Activated naive CD4-positive, alpha-beta T cell treated with anti-CD3 and anti-CD28 coated beads for 36 hours (primary cell): ENCODE measurements at regions of chr13 and their contacts with region 1.

Region 1: GRCh38 chr13:44710576-44710975 is 134.4 kb upstream of the TSC22D1 start:
- DNase-seq: peak; percentile 53
- H3K4me3 Mint-ChIP-seq: no peak overlapping the region
- H3K27ac Mint-ChIP-seq: no peak overlapping the region
- H3K4me1 Mint-ChIP-seq: peaks cover 11% of the 10 kb centered on the region
- H3K27me3 Mint-ChIP-seq: peaks cover 4% of the 10 kb centered on the region

Region 2: GRCh38 chr13:44537248-44537647 is 173.3 kb before region 1 on chr13:
- CTCF ChIA-PET with region 1: no interaction called
- intact Hi-C with region 1: no loop called
- DNase-seq: no peak
- H3K4me3 Mint-ChIP-seq: no peak overlapping the region
- H3K27ac Mint-ChIP-seq: no peak overlapping the region
- H3K4me1 Mint-ChIP-seq: peaks cover 8% of the 10 kb centered on the region
- H3K27me3 Mint-ChIP-seq: no peaks in the 10 kb centered on the region

Region 3: GRCh38 chr13:44648392-44649103 is 62.0 kb before region 1 on chr13:
- CTCF ChIA-PET with region 1: no interaction called
- intact Hi-C with region 1: loop called (anchors 2 kb)
- DNase-seq: no peak
- H3K4me3 Mint-ChIP-seq: no peak overlapping the region
- H3K27ac Mint-ChIP-seq: no peak overlapping the region
- H3K4me1 Mint-ChIP-seq: peaks cover 14% of the 10 kb centered on the region
- H3K27me3 Mint-ChIP-seq: peaks cover 22% of the 10 kb centered on the region

Region 4: DNA sequence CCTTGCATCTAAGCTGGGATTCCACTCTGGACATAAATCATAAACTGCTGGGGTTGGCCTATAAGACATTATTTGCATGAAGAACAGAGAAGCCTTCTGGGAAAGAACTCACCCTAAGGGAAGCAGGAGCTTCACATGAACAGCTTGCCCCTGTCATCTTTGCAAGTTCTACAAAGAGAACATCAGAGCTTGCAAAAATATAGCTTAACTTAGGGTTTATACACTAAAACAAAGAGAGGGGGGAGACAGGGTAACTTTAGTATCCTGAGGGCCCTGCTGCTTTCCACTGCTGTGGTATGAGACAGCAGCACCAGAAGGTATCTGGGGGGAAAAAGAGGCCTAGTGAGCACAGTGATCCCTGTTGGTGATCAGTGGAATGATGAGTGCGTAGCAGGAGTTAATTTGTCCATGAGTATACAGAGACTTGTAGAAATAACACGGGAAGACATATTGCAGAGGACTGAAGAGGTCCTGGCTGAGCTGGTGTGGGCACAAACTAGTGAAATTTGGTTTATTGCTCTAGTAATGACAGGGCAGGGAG is 18.3 kb before region 1 on chr13:
- CTCF ChIA-PET with region 1: no interaction called
- intact Hi-C with region 1: no loop called
- DNase-seq: no peak
- H3K4me3 Mint-ChIP-seq: no peak overlapping the region
- H3K27ac Mint-ChIP-seq: no peak overlapping the region
- H3K4me1 Mint-ChIP-seq: no peaks in the 10 kb centered on the region
- H3K27me3 Mint-ChIP-seq: peaks cover 6% of the 10 kb centered on the region

Region 5: DNA sequence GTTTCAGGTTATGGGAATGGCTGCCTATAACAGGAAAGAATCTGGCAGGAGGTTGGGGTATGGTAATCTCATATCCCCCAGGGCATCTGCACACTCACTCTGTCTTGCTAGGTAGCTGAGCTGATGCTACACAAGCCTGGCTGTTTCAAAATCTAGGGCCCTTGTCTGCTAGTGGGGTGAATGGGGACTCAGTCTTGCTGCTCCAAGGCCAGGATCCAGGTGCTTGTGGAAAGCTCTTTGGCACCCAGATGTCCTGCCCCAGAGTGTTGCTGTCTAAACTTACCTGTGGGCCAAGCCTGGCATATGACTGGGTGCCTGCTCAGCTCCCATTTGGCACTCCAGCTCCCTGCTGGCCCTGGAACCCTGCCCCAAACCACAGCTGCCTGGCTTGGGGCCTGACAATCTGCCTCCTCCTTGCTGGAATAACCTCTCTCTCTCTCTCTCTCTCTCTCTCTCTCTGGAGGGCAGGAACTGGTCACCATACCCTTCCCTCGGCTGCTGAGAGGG is 23.7 kb after region 1 on chr13:
- CTCF ChIA-PET with region 1: no interaction called
- intact Hi-C with region 1: no loop called
- DNase-seq: no peak
- H3K4me3 Mint-ChIP-seq: no peak overlapping the region
- H3K27ac Mint-ChIP-seq: no peak overlapping the region
- H3K4me1 Mint-ChIP-seq: no peaks in the 10 kb centered on the region
- H3K27me3 Mint-ChIP-seq: peaks cover 3% of the 10 kb centered on the region

Region 6: DNA sequence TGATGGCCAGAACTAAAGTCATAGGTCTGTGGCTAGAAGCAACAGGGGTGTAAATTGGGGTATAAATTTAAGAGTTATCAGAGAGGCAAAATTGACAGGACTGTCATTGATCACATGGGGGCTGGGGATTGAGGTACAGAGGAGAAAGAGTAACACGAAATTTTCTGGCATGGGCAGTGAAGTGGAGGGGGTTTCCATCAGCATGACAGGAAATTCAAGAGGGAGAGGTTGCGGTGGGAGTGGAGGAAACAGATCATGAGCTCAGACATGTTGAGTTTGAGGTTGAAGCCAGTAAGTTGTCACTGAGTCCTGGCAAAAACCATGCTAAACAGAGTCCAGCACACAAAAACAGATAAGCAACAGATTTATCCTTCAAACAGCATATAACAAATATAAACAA is 57.7 kb after region 1 on chr13:
- CTCF ChIA-PET with region 1: no interaction called
- intact Hi-C with region 1: loop called (anchors 2 kb)
- DNase-seq: peak; percentile 72
- H3K4me3 Mint-ChIP-seq: no peak overlapping the region
- H3K27ac Mint-ChIP-seq: peak overlapping the region; percentile 85
- H3K4me1 Mint-ChIP-seq: peaks cover 27% of the 10 kb centered on the region
- H3K27me3 Mint-ChIP-seq: no peaks in the 10 kb centered on the region

Region 7: GRCh38 chr13:44801990-44802389 is 91.4 kb after region 1 on chr13:
- CTCF ChIA-PET with region 1: no interaction called
- intact Hi-C with region 1: no loop called
- DNase-seq: no peak
- H3K4me3 Mint-ChIP-seq: no peak overlapping the region
- H3K27ac Mint-ChIP-seq: no peak overlapping the region
- H3K4me1 Mint-ChIP-seq: no peaks in the 10 kb centered on the region
- H3K27me3 Mint-ChIP-seq: peaks cover 2% of the 10 kb centered on the region